ENCODE measurements at regions of chr1 and their contacts with region 1.

Region 1: GRCh38 chr1:10824821-10825423 is 28.5 kb upstream of the CASZ1 start:
- DNase-seq: peak in 1 of 2 donors; percentile 78
- H3K4me3 ChIP-seq: peak overlapping the region in 1 of 3 donors; percentile 18
- H3K27ac ChIP-seq: peak overlapping the region; percentile 45 to 61
- H3K4me1 ChIP-seq: no peaks in the 10 kb centered on the region
- H3K27me3 ChIP-seq: peaks cover 0 to 3% of the 10 kb centered on the region in 2 donors
- CTCF ChIP-seq: peak in 1 of 3 donors; percentile 34
- POLR2A ChIP-seq: no peak

Region 2: DNA sequence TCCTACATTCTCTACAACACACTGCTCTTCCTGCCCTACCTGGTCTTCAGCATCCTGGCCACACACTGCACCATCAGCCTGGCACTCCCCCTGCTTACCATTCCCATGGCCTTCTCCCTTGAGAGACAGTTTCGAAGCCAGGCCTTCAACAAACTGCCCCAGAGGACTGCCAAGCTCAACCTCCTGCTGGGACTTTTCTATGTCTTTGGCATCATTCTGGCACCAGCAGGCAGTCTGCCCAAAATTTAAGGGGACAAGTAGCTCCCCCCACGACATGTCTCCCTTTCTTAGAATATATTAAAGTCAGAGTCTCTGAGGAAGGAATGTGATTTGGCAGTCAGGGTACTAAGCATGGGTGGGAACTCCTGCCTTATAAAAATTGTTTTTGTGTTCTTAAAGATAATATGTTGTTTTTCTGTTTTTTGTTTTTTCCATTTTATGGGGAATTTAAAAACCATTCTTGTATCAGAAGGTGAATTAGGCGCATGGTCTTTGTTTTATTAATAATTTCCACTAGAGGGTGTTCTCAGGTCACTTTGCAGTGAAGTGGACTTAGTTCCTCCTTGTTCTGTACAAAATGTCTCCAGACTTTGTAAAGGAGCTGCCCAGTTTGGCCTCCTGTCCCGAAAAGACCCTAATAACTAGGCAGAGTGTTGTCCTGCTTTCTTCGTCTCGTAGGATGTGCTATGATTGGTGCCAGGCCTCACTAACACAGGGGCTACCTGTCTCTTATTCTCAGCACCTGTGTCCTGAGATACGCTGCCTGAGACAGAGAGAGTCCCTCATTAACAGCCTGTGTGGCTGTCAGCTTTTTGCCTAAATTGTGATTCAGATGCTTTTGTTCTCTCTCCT is 461.2 kb after region 1 on chr1:
- intact Hi-C with region 1: loop called (anchors 5 kb)
- DNase-seq: no peak
- H3K4me3 ChIP-seq: no peak overlapping the region
- H3K27ac ChIP-seq: no peak overlapping the region
- H3K4me1 ChIP-seq: no peaks in the 10 kb centered on the region
- H3K27me3 ChIP-seq: no peaks in the 10 kb centered on the region
- CTCF ChIP-seq: no peak
- POLR2A ChIP-seq: no peak